ENCODE measurements at regions of chr10 and their contacts with region 1.

Region 1: DNA sequence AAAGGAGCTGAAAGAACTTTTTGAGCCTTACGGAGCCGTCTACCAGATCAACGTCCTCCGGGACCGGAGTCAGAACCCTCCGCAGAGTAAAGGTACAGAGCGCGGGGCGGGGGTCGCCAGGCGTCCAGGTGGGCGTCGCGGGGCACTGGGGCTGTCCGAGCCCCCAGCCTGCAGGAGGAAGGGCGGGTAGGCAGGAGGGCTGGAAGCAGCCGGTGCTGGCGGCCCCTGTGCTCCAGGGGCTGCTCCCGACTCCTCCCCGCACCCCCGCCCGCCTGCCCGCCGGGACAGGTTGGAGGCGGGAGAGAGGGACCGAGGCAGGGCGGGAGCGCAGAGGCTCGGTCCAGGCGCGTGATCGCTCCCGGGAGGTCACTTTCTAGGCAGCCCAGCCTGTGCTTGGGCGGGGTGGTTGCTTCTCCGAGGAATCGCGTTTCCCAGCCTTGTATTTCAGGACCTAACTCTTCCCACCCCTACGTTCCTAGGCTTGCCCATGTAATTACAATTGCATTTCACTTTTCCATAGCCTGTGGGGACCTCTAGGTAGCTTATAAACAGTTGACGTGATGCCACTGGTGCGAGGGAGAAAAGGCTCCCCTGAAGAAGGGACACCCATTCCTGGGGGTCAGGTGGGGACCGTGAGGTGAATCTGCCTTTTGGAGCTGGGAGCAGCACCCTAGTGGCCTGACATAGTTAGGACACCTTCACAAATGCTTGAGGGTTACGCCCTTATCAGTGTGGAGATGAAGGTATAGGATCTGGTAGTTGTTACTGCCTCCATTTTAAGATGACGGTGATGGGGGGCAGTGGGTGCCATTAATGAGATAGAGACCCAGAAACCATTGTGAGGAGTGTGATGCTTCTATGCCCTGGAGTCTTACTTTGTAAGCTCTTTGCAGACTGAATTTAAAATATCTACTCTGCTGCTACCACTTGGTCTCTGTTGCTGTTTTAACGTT is 148.2 kb downstream of the CELF2 start:
- DNase-seq: peak; percentile 86
- ATAC-seq: peak; percentile 72
- H3K4me3 Mint-ChIP-seq: no peak overlapping the region
- H3K27ac Mint-ChIP-seq: peak overlapping the region; percentile 99
- H3K4me1 Mint-ChIP-seq: peaks cover 26% of the 10 kb centered on the region
- H3K27me3 Mint-ChIP-seq: no peaks in the 10 kb centered on the region
- CTCF ChIP-seq: peak; percentile 80

Region 2: DNA sequence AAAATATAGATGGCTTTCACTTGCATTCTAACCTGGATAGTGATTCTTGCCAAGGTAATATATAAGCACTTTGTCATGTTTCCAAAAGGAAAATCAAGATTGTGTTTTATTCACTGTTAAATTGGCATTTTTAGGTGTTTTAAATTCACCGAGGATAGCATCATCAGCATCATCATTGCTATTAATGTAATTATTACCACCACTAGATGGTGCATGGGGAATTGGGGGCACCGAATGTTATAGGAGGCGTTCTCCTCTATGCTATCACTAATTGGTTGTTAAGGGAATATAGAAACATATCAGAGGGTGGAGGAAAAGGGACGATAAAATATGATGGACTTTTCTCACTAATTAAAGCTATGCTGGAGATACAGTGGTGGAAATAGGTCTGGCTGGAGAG is 52.7 kb before region 1 on chr10:
- CTCF ChIA-PET with region 1: interaction called, 52 read pairs
- POLR2A ChIA-PET with region 1: interaction called, 3 read pairs
- intact Hi-C with region 1: loop called (anchors 5 kb)
- DNase-seq: peak; percentile 50
- ATAC-seq: peak; percentile 92
- H3K4me3 Mint-ChIP-seq: no peak overlapping the region
- H3K27ac Mint-ChIP-seq: peak overlapping the region; percentile 26
- H3K4me1 Mint-ChIP-seq: peaks cover 18% of the 10 kb centered on the region
- H3K27me3 Mint-ChIP-seq: no peaks in the 10 kb centered on the region
- CTCF ChIP-seq: peak; percentile 64

Region 3: GRCh38 chr10:11145495-11145855 is 20.4 kb before region 1 on chr10:
- CTCF ChIA-PET with region 1: interaction called, 100 read pairs
- POLR2A ChIA-PET with region 1: interaction called, 261 read pairs
- intact Hi-C with region 1: no loop called
- DNase-seq: peak; percentile 79
- ATAC-seq: peak; percentile 63
- H3K4me3 Mint-ChIP-seq: peak overlapping the region; percentile 74
- H3K27ac Mint-ChIP-seq: peak overlapping the region; percentile 93
- H3K4me1 Mint-ChIP-seq: peaks cover 86% of the 10 kb centered on the region
- H3K27me3 Mint-ChIP-seq: no peaks in the 10 kb centered on the region
- CTCF ChIP-seq: no peak

Region 4: GRCh38 chr10:11209830-11210181 is 43.9 kb after region 1 on chr10:
- CTCF ChIA-PET with region 1: interaction called, 6 read pairs
- POLR2A ChIA-PET with region 1: interaction called, 15 read pairs
- intact Hi-C with region 1: no loop called
- DNase-seq: no peak
- ATAC-seq: peak; percentile 4
- H3K4me3 Mint-ChIP-seq: peak overlapping the region; percentile 72
- H3K27ac Mint-ChIP-seq: peak overlapping the region; percentile 97
- H3K4me1 Mint-ChIP-seq: peaks cover 98% of the 10 kb centered on the region
- H3K27me3 Mint-ChIP-seq: no peaks in the 10 kb centered on the region
- CTCF ChIP-seq: no peak

Region 5: DNA sequence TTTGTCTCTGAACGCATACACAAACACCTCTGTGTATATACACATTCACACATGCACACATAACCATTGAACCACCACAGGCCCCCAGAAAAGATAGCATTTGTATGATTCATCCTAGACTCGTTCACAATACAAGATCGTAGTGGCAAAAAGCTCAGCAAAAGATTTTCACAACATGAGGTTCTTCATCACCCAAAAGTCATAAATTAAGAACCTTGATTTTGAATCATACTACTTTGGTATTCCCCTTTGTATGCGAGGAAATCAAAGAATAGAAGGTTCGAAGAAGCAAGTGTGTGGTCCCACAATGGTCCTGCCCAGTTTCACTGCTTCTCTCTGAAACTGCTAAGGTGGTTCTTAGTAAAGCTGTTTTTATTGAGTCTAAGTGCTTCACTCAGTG is 52.5 kb after region 1 on chr10:
- CTCF ChIA-PET with region 1: interaction called, 8 read pairs
- POLR2A ChIA-PET with region 1: interaction called, 14 read pairs
- intact Hi-C with region 1: no loop called
- DNase-seq: peak; percentile 76
- ATAC-seq: peak; percentile 92
- H3K4me3 Mint-ChIP-seq: peak overlapping the region; percentile 28
- H3K27ac Mint-ChIP-seq: peak overlapping the region; percentile 97
- H3K4me1 Mint-ChIP-seq: peaks cover 94% of the 10 kb centered on the region
- H3K27me3 Mint-ChIP-seq: no peaks in the 10 kb centered on the region
- CTCF ChIP-seq: no peak

Region 6: GRCh38 chr10:11236234-11236633 is 70.4 kb after region 1 on chr10:
- CTCF ChIA-PET with region 1: interaction called, 7 read pairs
- POLR2A ChIA-PET with region 1: interaction called, 32 read pairs
- intact Hi-C with region 1: no loop called
- DNase-seq: peak; percentile 57
- ATAC-seq: peak; percentile 48
- H3K4me3 Mint-ChIP-seq: peak overlapping the region; percentile 20
- H3K27ac Mint-ChIP-seq: peak overlapping the region; percentile 92
- H3K4me1 Mint-ChIP-seq: peaks cover 95% of the 10 kb centered on the region
- H3K27me3 Mint-ChIP-seq: no peaks in the 10 kb centered on the region
- CTCF ChIP-seq: no peak

Region 7: DNA sequence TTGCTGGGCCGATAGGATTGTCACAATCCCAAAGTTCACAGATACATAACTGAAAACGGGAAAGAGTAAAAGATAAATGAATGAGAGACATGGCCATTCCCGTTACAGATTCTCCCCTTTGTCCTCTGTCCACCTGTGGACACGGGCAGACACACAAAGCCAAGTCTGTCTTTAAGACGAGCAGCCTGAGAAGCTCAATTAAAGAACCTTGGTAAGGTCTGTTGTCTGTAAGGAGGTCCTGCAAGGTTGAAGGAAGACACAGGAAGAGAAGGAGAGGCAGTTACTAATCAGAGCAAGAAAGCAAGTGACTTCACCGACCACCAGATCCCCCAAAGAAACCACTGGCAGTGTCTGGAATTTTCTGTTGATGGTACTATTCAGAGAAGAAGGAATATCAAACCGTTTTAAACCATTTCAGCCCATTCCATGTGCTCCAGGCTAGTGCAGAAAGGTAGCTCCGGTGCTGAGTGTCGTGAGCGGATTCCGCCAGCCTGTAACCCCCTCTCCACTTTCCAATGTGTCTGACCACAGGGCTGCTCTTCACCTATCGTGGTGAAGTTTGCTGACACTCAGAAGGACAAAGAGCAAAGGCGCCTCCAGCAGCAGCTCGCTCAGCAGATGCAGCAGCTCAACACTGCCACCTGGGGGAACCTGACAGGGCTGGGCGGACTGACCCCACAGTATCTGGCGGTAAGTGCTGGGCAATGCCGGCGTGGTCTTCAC is 104.4 kb after region 1 on chr10:
- CTCF ChIA-PET with region 1: interaction called, 19 read pairs
- POLR2A ChIA-PET with region 1: interaction called, 7 read pairs
- intact Hi-C with region 1: no loop called
- DNase-seq: peak; percentile 85
- ATAC-seq: peak; percentile 83
- H3K4me3 Mint-ChIP-seq: peak overlapping the region; percentile 3
- H3K27ac Mint-ChIP-seq: peak overlapping the region; percentile 82
- H3K4me1 Mint-ChIP-seq: peaks cover 81% of the 10 kb centered on the region
- H3K27me3 Mint-ChIP-seq: no peaks in the 10 kb centered on the region
- CTCF ChIP-seq: peak; percentile 86

Measured in activated CD8-positive, alpha-beta T cell treated with anti-CD3 and anti-CD28 coated beads for 36 hours (primary cell).